Gastrocnemius medialis (tissue), 4 donors: ENCODE measurements at regions of chr12 and their contacts with region 1.

Region 1: DNA sequence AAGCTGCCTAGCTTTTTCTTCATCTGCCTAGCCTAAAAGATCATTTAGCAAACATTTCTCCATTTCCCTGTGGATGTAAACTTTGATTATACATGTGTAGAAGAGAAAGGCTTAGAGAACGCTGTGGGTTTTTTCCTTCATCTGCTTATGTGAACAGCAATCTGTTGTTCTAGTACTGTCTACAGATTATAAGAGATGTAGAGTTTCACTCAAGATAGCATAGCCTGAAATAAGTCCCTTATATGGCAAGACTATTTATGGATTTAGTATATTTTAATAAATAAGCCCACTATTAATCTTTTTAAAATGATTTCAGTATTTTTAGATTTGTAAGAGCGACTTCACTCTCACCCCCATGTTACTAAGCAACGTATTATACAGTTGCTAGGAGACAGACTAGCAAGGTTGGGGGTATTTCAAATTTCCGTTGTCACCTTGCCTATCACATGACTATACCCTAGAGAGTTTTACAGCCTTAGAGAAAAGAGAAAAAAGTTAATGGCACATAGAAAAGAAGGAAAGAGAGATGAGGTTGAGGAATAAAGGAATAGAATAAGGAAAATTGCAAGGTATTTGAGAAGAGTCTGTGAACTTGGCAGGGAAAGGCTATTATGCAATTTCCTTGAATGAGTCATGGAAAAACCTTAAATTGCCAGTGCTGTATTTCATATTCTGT is 12.2 kb upstream of the TUBA1A start:
- DNase-seq: no peak
- ATAC-seq: peak; percentile 92 to 95
- H3K4me3 ChIP-seq: no peak overlapping the region
- H3K27ac ChIP-seq: peak overlapping the region; percentile 48 to 54 (median 51)
- H3K4me1 ChIP-seq: peaks cover 12 to 17% of the 10 kb centered on the region in 2 donors
- H3K27me3 ChIP-seq: no peaks in the 10 kb centered on the region
- CTCF ChIP-seq: no peak
- POLR2A ChIP-seq: no peak

Region 2: DNA sequence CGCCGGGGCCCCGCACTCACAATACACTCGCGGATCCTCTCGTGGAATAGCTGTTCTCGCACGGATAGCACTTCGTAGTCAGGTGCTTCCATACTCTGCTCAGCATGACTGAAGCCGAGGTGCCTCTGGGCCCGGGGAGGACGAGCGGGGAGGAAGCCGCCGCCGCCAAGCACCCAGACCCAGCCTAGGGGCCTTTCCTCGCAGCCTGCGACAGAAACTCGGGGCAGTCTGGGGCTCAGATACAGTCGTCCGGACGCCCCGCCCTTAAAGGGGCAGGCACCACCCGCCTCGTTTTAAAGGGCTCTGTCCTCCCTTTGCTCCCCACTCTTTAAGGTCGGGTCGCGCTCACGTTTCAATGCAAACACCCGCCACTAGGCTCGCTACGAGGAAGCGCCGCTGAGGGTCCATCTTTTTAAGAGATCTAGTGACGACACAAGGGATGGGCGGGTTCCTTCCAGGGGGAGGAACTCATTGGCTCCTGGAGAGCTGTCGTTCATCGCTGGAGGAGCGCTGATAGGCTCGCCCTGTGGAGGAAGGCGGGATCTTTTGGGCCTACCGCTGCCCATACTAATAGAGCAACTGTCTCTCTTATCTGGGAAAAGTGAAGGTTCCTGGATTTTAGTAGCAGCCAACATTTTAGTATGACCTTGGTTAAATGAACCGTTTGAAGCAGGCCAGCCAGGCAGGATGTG is 90.4 kb before region 1 on chr12 and contains the start of gene LMBR1L:
- in situ Hi-C with region 1: no loop called
- intact Hi-C with region 1: no loop called
- DNase-seq: peak; percentile 97 to 98
- ATAC-seq: peak; percentile 97 to 98
- H3K4me3 ChIP-seq: peak within 1 kb of the TSS; percentile 81 to 99 (median 99)
- H3K27ac ChIP-seq: peak within 1 kb of the TSS; percentile 92 to 100 (median 100)
- H3K4me1 ChIP-seq: peaks cover 43 to 48% of the 10 kb centered on the region in 2 donors
- H3K27me3 ChIP-seq: no peaks in the 10 kb centered on the region
- CTCF ChIP-seq: peak; percentile 50 to 67 (median 56)
- POLR2A ChIP-seq: peak; percentile 80 to 97
- total RNA-seq, gene LMBR1L: 11.1 to 27.2 (median 15.9) TPM

Region 3: GRCh38 chr12:49188914-49189367 is 12.1 kb before region 1 on chr12 and contains the start of gene TUBA1A:
- in situ Hi-C with region 1: no loop called
- intact Hi-C with region 1: loop called (anchors 1 kb)
- DNase-seq: peak; percentile 77 to 78
- ATAC-seq: peak; percentile 79 to 90
- H3K4me3 ChIP-seq: peak within 1 kb of the TSS; percentile 67 to 93 (median 78)
- H3K27ac ChIP-seq: peak within 1 kb of the TSS; percentile 80 to 86 (median 84)
- H3K4me1 ChIP-seq: peaks cover 8 to 14% of the 10 kb centered on the region in 2 donors
- H3K27me3 ChIP-seq: peaks cover 7 to 8% (median 7%) of the 10 kb centered on the region in 3 donors
- CTCF ChIP-seq: no peak
- POLR2A ChIP-seq: peak; percentile 51 to 82
- total RNA-seq, gene TUBA1A: 14.7 to 68.0 (median 25.1) TPM

Region 4: GRCh38 chr12:49244176-49244575 is 43.1 kb after region 1 on chr12:
- in situ Hi-C with region 1: no loop called
- intact Hi-C with region 1: no loop called
- DNase-seq: no peak
- ATAC-seq: no peak
- H3K4me3 ChIP-seq: no peak overlapping the region
- H3K27ac ChIP-seq: peak overlapping the region in 1 of 4 donors; percentile 48
- H3K4me1 ChIP-seq: no peaks in the 10 kb centered on the region
- H3K27me3 ChIP-seq: no peaks in the 10 kb centered on the region
- CTCF ChIP-seq: no peak
- POLR2A ChIP-seq: no peak